Naive thymus-derived CD4-positive, alpha-beta T cell (primary cell): ENCODE measurements at regions of chr19 and their contacts with region 1.

Region 1: DNA sequence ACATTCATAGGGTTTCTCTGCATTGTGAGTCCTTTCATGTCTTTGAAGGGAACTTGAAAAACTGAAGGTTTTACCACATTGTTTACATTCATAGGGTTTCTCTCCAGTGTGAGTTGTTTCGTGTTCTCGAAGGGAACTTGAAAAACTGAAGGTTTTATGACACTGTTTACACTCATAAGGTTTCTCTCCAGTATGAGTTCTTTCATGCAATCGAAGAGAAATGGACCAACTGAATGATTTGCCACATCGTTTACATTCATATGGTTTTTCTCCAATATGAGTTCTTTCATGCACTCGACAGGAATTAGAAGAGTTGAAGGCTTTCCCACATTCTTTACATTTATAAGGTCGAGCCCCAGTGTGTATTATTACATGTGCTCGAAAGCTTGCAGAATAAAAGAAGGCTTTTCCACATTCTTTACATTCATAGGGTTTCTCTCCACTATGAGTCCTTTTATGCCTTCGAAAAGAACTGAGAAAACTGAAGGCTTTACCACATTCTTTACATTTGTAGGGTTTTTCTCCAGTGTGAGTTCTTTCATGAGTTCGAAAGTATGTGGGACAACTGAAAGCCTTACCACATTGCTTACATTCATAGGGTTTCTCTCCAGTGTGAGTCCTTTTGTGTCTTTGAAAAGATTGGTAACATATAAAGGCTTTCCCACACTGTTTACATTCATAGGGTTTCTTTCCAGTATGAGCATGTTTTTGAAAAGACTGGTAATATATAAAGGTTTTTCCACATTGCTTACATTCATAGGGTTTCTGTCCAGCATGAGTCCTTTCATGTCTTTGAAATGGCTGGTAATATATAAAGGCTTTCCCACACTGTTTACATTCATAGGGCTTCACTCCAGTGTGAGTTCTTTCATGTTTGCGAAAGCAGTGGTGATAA is 20.7 kb downstream of the ZNF14 start:
- DNase-seq: no peak
- ATAC-seq: no peak
- H3K4me3 ChIP-seq: peak overlapping the region; percentile 17
- H3K4me3 Mint-ChIP-seq: peak overlapping the region in 2 of 10 donors; percentile 27 to 29
- H3K27ac ChIP-seq: no peak overlapping the region
- H3K27ac Mint-ChIP-seq: peak overlapping the region in 2 of 9 donors; percentile 51 to 83
- H3K4me1 ChIP-seq: no peaks in the 10 kb centered on the region
- H3K4me1 Mint-ChIP-seq: peaks cover 0 to 5% (median 0%) of the 10 kb centered on the region in 7 donors
- H3K27me3 ChIP-seq: no peaks in the 10 kb centered on the region
- H3K27me3 Mint-ChIP-seq: no peaks in the 10 kb centered on the region

Region 2: DNA sequence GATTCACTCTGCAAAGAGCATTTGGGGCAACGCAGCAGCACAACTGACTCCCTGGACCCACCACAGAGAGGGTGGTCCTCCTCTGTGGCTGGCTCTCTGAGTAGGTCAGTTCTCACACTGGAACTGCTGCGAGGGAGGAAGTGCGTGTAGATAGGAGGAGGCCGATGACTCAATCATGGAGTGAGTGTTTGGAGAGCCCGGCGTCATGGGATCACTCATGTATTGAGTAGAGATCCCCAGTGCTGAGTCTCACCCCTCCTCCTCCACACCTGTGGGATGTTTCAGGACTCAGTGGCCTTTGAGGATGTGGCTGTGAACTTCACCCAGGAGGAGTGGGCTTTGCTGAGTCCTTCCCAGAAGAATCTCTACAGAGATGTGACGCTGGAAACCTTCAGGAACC is 34.6 kb before region 1 on chr19:
- CTCF ChIA-PET with region 1: no interaction called
- POLR2A ChIA-PET with region 1: interaction called, 11 read pairs
- intact Hi-C with region 1: no loop called
- DNase-seq: no peak
- ATAC-seq: no peak
- H3K4me3 ChIP-seq: peak overlapping the region; percentile 22
- H3K4me3 Mint-ChIP-seq: peak overlapping the region in 6 of 10 donors; percentile 9 to 71 (median 48)
- H3K27ac ChIP-seq: no peak overlapping the region
- H3K27ac Mint-ChIP-seq: peak overlapping the region in 4 of 9 donors; percentile 28 to 58 (median 45)
- H3K4me1 ChIP-seq: no peaks in the 10 kb centered on the region
- H3K4me1 Mint-ChIP-seq: peaks cover 0 to 26% (median 17%) of the 10 kb centered on the region in 7 donors
- H3K27me3 ChIP-seq: no peaks in the 10 kb centered on the region
- H3K27me3 Mint-ChIP-seq: no peaks in the 10 kb centered on the region

Region 3: DNA sequence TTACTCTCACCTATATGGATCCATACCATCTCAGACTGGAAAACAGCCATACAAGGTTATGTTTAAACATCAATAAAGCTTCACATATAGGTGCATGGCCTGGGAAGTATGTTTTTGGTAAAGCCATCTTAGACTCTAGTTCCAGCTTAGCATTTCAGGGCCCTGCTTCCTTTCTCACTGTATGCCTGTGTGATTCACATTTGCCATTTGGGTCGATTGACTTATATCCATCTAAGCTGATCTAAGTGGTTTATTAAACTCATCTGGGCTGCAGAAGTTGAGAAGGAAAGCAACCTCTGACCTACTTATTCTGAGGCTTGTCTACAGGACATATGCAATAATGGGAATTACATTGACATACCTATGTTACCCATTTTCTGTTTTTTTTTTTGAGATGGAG is 75.8 kb after region 1 on chr19:
- CTCF ChIA-PET with region 1: no interaction called
- POLR2A ChIA-PET with region 1: no interaction called
- intact Hi-C with region 1: no loop called
- DNase-seq: no peak
- ATAC-seq: no peak
- H3K4me3 ChIP-seq: no peak overlapping the region
- H3K4me3 Mint-ChIP-seq: no peak overlapping the region
- H3K27ac ChIP-seq: no peak overlapping the region
- H3K27ac Mint-ChIP-seq: no peak overlapping the region
- H3K4me1 ChIP-seq: no peaks in the 10 kb centered on the region
- H3K4me1 Mint-ChIP-seq: peaks cover 0 to 25% (median 23%) of the 10 kb centered on the region in 7 donors
- H3K27me3 ChIP-seq: no peaks in the 10 kb centered on the region
- H3K27me3 Mint-ChIP-seq: no peaks in the 10 kb centered on the region